ENCODE measurements at regions of chr1 and their contacts with region 1.

Region 1: DNA sequence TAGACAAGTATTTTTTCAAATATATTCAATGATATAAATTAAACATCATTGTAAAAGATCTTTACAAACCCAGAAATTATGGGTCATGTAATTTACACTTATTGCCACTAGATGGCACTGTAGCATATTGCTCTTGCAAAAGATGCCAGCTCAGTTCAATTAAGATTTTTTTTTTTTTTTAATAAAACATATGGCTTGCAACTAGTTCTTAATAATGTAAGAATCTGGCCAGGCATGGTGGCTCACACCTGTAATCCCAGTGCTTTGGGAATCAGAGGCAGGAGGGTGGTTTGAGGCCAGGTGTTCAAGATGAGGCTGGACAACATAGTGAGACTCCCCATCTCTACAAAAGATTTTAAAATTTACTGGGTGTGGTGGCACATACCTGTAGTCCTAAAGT is 49.4 kb upstream of the DESI2 start:
- DNase-seq: peak; percentile 62
- H3K4me3 ChIP-seq: no peak overlapping the region
- H3K27ac ChIP-seq: no peak overlapping the region
- H3K4me1 ChIP-seq: no peaks in the 10 kb centered on the region
- CTCF ChIP-seq: peak; percentile 98

Region 2: DNA sequence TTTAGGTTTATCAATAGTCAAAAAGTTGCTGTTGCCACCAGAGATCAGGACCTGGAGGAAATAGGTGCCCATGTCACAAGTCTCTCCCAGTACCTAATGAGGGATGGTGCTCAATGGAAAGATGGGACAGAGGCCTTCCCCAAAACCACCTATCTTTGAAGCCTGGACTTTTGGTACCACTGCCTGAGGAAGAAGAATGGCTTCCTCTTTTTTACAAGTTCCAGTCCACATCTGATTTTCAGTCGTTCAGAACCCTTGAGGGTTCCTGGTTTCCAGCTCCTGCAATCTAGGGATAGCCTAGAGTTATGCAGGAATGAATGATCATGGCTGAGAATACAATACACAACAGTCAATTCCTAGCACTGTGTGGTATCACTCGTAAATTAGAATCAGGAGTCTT is 136.8 kb before region 1 on chr1:
- CTCF ChIA-PET with region 1: no interaction called
- POLR2A ChIA-PET with region 1: no interaction called
- intact Hi-C with region 1: no loop called
- DNase-seq: no peak
- H3K4me3 ChIP-seq: no peak overlapping the region
- H3K27ac ChIP-seq: no peak overlapping the region
- H3K4me1 ChIP-seq: no peaks in the 10 kb centered on the region
- CTCF ChIP-seq: no peak

Region 3: DNA sequence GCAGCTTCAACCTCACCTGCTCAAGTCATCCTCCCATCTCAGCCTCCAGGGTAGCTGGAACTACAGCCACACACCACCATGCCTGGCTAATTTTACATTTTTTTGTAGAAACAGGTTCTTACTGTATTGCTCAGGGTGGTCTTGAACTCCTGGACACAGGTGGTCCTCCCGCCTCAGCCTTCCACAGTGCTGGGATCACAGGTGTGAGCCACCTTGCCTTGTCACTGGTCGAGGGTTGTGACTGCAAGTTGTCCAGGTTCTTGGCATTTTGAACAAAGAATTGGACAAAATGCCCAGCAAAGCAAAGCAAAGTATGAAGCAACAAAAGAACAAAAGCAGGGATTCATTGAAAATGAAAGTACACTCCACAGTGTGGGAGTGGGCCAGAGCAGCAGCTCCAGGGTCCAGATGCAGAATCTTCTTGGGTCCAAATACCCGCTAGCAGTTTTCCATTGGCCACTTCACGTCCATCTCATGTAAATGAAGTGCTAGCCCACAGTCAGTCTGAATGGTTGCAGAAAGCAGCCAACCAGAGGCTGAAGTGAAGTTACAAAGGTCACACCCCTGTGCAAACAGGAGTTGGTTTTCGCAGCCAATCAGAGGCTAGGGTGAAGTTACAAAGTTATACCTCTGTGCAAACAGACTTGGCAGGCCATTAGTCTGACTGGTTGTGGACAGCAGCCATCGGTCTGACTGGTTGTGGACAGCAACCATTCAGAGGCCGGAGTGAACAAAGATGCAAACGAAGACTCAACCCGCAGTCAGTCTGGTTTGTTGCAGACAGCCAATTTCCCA is 441.8 kb after region 1 on chr1:
- CTCF ChIA-PET with region 1: no interaction called
- POLR2A ChIA-PET with region 1: interaction called, 3 read pairs
- intact Hi-C with region 1: loop called (anchors 2 kb)
- DNase-seq: no peak
- H3K4me3 ChIP-seq: no peak overlapping the region
- H3K27ac ChIP-seq: no peak overlapping the region
- H3K4me1 ChIP-seq: peaks cover 8% of the 10 kb centered on the region
- CTCF ChIP-seq: no peak

Measured in OCI-LY7 (cell line).